RWPE1 (cell line): ENCODE measurements at regions of chr9 and their contacts with region 1.

Region 1: GRCh38 chr9:132176338-132176737 is 14.5 kb downstream of the NTNG2 start:
- DNase-seq: no peak
- H3K27ac ChIP-seq: no peak overlapping the region
- CTCF ChIP-seq: no peak

Region 2: DNA sequence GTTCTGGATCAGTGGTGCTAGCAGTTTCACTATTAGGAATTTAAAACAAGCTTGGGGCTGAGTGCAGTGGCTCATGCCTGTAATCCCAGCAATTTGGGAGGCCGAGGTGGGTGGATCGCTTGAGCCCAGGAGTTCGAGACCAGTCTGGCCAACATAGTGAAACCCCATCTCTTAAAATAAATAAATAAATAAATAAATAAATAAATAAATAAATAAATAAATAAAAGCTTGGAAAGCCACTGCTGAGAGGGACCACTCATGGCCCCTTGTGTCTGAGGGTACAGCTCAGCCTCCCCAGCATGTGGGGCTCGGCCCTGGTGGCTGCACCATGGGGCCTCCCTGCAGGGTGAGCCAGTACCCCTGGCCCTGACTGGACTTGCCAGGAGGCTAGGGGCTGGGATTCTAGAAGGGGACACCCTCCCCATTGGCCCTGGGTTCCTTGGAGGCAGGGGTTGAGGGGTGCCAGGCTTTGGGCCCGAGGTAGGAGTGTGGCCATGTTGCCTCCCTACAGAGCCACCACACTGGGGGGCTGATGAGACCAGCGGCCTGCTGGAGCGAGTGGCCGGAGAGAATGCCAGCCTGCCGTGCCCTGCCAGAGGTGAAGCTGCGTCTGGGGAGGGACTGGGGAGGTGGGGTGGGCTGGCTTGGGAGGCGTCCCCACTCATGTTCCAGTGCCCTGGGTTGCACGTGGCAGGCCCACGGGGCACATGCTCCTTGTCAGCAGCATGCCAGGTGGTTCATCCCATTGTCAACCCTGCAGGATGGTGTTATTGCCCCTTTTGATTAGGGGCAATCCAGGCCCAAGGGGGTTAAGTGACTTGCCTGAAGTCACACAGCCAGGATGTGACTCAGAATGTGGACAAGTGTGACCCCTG is 1834.3 kb before region 1 on chr9:
- CTCF ChIA-PET with region 1: interaction called, 10 read pairs
- POLR2A ChIA-PET with region 1: no interaction called
- DNase-seq: no peak
- H3K27ac ChIP-seq: no peak overlapping the region
- CTCF ChIP-seq: no peak

Region 3: GRCh38 chr9:132154863-132155309 is 21.5 kb before region 1 on chr9:
- CTCF ChIA-PET with region 1: no interaction called
- POLR2A ChIA-PET with region 1: no interaction called
- DNase-seq: no peak
- H3K27ac ChIP-seq: no peak overlapping the region
- CTCF ChIP-seq: no peak

Region 4: DNA sequence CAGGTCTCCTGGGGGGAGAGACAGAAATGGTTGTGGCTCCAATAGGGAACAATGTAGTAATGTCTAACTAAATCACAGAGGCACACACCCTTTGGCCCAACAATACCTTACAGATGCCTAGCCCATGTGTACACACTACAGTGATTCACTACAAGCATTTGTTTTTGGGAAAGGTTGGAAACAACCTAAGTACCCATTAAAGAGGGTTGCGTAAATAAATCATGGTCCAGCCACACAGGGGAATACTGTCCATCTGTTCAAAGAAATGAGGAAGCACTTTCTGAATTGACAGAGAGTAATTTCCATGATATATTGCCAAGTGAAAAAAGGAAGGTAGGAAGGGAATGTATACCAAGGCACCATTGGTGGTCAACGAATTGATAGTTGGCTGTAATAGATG is 832.5 kb after region 1 on chr9:
- CTCF ChIA-PET with region 1: no interaction called
- POLR2A ChIA-PET with region 1: no interaction called
- DNase-seq: no peak
- H3K27ac ChIP-seq: no peak overlapping the region
- CTCF ChIP-seq: no peak